Aorta (tissue), 5 donors: ENCODE measurements at regions of chr18 and their contacts with region 1.

Region 1: GRCh38 chr18:74291771-74292540 is at the start of gene CYB5A:
- DNase-seq: peak; percentile 99
- ATAC-seq: peak; percentile 98
- H3K4me3 ChIP-seq: peak within 1 kb of the TSS; percentile 53 to 66
- H3K27ac ChIP-seq: peak within 1 kb of the TSS in 1 of 2 donors; percentile 13
- H3K4me1 ChIP-seq: peaks cover 0 to 2% of the 10 kb centered on the region in 2 donors
- H3K27me3 ChIP-seq: no peaks in the 10 kb centered on the region
- total RNA-seq, gene CYB5A: 33.2 to 41.6 TPM

Region 2: DNA sequence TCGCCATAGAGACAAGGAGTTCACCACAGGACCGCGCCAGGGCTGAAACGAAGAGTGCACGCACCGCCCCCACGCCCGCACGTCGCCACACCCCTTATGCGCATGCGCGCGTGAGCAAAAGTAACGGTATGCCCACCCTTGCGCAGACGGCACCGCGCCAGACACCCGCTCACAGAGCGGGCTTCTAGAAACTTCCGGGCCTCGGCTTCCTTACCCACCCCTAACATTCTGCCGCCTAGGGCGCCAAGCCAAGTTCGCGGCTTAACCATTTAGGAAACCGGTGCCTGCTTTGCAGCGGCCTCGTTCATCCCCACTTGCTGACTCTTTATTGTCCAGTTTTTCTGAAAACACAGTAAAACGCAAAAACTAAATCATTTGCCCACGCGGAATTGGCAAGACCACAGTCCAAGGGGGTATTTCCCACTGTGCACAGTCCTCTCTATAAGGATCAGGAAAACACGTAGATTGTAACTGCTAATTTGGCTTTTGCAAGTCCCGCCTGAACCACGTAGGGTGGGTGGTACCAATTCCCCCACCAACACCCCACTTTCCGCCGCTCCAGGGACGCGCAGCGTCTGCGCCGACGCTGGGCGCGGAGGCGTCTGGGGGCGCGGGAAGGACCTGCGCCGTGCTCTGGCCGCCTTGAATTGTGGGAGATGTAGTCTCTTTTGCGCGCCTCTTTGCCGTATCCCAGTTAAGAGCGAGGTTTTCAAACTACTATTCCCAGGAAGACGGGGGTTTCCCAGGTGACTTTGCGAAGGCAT is 144.0 kb before region 1 on chr18 and contains the starts of genes FBXO15 and TIMM21:
- intact Hi-C with region 1: loop called (anchors 2 to 10 kb)
- DNase-seq: peak; percentile 98 to 99
- ATAC-seq: peak; percentile 99
- H3K4me3 ChIP-seq: peak within 1 kb of the TSS; percentile 98 to 99
- H3K27ac ChIP-seq: peak within 1 kb of the TSS; percentile 29 to 84
- H3K4me1 ChIP-seq: no peaks in the 10 kb centered on the region
- H3K27me3 ChIP-seq: no peaks in the 10 kb centered on the region
- total RNA-seq, gene FBXO15: 0.51 to 0.52 TPM
- total RNA-seq, gene TIMM21: 18.6 to 20.5 TPM

Region 3: DNA sequence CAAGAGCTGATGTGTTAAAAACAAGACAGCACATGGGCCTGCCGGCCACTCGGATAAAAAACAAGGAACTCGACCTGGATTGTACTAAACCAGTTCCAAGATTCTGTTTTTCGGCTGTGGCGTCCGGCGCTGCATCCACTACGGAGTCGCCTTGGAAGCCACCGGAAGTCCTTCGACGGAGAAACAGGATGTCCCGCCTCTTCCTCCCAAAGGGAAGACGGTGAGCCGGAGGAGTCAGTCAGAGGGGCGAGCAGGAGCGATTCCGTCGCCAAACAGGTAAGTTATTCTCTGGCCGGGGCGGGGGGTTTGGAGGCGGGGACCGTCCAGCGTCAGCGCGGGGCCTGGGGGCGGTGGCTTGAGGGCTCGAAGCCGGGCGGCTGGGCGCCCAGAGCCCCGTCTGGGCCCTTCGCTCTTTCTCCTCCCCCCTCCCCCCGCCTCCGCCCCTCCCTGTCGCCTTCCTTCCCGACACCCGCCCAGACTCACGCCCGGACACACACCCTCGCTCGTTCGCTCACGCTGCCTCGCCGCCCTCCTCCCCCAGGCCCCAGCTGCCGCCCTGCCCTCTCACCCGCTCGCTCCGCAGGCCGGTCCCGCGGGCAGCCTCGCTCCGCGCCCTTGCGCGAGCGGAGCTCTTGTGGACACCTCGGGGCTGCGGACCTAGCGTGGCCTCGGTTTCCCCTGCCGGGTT is 305.9 kb after region 1 on chr18 and contains the start of gene ZNF407:
- intact Hi-C with region 1: loop called in 1 of 2 experiments (anchors 5 kb)
- DNase-seq: peak; percentile 90 to 94
- ATAC-seq: peak; percentile 96
- H3K4me3 ChIP-seq: peak within 1 kb of the TSS; percentile 60 to 91
- H3K27ac ChIP-seq: peak within 1 kb of the TSS; percentile 62 to 96
- H3K4me1 ChIP-seq: no peaks in the 10 kb centered on the region
- H3K27me3 ChIP-seq: no peaks in the 10 kb centered on the region
- total RNA-seq, gene ZNF407: 16.0 to 21.1 TPM